ENCODE measurements at regions of chr16 and their contacts with region 1.

Region 1: DNA sequence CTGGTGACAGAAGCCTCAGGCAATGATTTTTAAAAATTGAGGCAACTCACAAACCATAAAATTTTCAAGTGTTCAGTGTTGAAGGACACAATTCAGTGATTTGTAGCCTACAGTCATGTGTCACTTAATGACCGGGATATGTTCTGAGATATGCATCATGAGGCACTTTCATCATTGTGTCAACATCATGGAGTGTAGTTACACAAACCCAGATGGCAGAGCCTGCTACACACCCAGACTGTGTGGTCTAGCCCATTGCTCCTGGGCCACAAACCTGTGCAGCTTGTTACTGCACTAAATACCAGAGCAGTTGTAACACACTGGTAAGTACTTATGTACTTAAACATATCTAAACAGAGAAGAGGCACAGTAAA is 1.6 kb downstream of the PRSS41 start:
- DNase-seq: peak in 1 of 2 experiments; percentile 87
- H3K4me3 ChIP-seq: no peak overlapping the region
- H3K27ac ChIP-seq: peak overlapping the region; percentile 27
- H3K4me1 ChIP-seq: peaks cover 36% of the 10 kb centered on the region
- H3K27me3 ChIP-seq: no peaks in the 10 kb centered on the region
- CTCF ChIP-seq: no peak

Region 2: DNA sequence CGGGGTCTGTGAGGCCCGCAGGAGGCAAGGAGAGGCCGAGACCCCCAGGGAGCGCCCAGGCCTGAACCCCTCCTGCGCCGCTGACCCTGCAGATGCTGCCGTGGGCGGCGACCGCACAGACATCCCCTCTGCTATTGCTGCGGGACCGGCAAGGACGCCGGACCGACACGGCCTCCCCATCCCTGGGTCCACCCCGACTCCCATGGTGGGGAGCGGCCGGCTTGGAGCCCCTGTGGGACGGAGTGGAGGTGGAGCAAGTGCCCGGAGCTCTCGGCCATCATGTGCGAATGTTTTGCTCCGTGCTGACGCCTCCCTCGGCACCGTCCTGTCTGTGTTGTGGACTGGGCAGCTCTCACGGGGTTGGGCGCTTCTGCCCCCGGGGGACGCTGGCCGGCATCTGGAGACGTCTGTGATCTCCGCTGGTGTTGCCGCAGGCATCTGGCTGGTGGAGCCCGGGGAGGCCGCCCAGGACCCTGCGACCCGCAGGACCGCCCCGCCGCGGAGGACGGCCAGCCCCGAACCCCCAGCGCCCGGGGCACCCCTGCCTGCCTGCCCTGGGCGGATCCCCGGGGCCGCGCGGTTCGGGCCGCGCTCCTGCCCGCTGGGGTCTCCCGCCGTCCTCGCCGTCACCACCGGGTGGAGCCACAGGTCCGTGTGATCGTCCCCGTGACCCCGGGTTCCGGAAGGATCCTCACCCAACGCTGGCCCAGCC is 1986.5 kb before region 1 on chr16:
- CTCF ChIA-PET with region 1: no interaction called
- POLR2A ChIA-PET with region 1: no interaction called
- intact Hi-C with region 1: no loop called
- DNase-seq: peak in 1 of 2 experiments; percentile 40
- H3K4me3 ChIP-seq: no peak overlapping the region
- H3K27ac ChIP-seq: no peak overlapping the region
- H3K4me1 ChIP-seq: peaks cover 16% of the 10 kb centered on the region
- H3K27me3 ChIP-seq: peaks cover 4% of the 10 kb centered on the region; the same call in 1 of the 2 replicates
- CTCF ChIP-seq: 0 out of 2 replicates have a peak, but pooled peaks have one; percentile 26

Region 3: GRCh38 chr16:1884155-1884760 is 915.6 kb before region 1 on chr16:
- CTCF ChIA-PET with region 1: interaction called, 11 read pairs
- POLR2A ChIA-PET with region 1: no interaction called
- intact Hi-C with region 1: no loop called
- DNase-seq: no peak
- H3K4me3 ChIP-seq: no peak overlapping the region
- H3K27ac ChIP-seq: no peak overlapping the region
- H3K4me1 ChIP-seq: peaks cover 8% of the 10 kb centered on the region
- H3K27me3 ChIP-seq: peaks cover 7% of the 10 kb centered on the region; the same call in 1 of the 2 replicates
- CTCF ChIP-seq: peak; percentile 57

Region 4: GRCh38 chr16:2770057-2770951 is 29.5 kb before region 1 on chr16:
- CTCF ChIA-PET with region 1: no interaction called
- POLR2A ChIA-PET with region 1: no interaction called
- intact Hi-C with region 1: no loop called
- DNase-seq: peak in 1 of 2 experiments; percentile 39
- H3K4me3 ChIP-seq: no peak overlapping the region
- H3K27ac ChIP-seq: no peak overlapping the region
- H3K4me1 ChIP-seq: peaks cover 2% of the 10 kb centered on the region
- H3K27me3 ChIP-seq: no peaks in the 10 kb centered on the region
- CTCF ChIP-seq: no peak

Measured in PC-9 (cell line).